ENCODE measurements at regions of chr6 and their contacts with region 1.

Region 1: DNA sequence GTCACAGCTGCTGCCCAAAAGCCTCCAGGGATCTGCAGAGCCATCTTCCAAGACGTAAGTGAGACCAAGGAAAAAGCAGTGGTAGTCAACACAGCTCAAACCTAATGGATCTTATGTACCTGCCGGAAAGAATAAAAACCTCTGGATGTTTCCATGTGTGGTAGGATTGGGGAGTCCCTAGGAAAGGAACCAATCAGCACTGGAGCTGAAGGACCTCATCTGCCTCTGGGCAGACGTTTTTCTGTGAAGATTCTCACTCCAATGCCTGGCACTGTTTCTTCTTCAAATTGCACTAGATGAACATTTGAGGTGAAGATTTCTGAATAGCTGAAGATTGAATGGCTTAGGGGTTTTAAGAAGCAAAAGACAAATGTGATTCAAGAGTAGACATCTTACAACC is at the start of gene HLA-DQB2:
- DNase-seq: no peak
- H3K4me3 ChIP-seq: no peak within 1 kb of the TSS
- H3K27ac ChIP-seq: no peak within 1 kb of the TSS
- H3K4me1 ChIP-seq: no peaks in the 10 kb centered on the region
- H3K27me3 ChIP-seq: peaks cover 0 to 51% (median 0%) of the 10 kb centered on the region in 4 donors
- CTCF ChIP-seq: no peak
- EP300 ChIP-seq: no peak
- POLR2A ChIP-seq: no peak
- total RNA-seq, gene HLA-DQB2: 0.33 to 1.7 (median 0.86) TPM

Region 2: GRCh38 chr6:32666420-32667300 is 96.8 kb before region 1 on chr6 and contains the start of gene HLA-DQB1:
- intact Hi-C with region 1: loop called (anchors 5 kb)
- DNase-seq: no peak
- H3K4me3 ChIP-seq: no peak within 1 kb of the TSS
- H3K27ac ChIP-seq: no peak within 1 kb of the TSS
- H3K4me1 ChIP-seq: no peaks in the 10 kb centered on the region
- H3K27me3 ChIP-seq: peaks cover 0 to 6% (median 0%) of the 10 kb centered on the region in 4 donors
- CTCF ChIP-seq: no peak
- EP300 ChIP-seq: no peak
- POLR2A ChIP-seq: no peak
- total RNA-seq, gene HLA-DQB1: 0.71 to 5.8 (median 4.8) TPM in 3 of 4 donors, not detected in the other

Measured in esophagus muscularis mucosa (tissue), 4 donors.